Activated CD4-positive, alpha-beta memory T cell treated with anti-CD3 and anti-CD28 coated beads for 36 hours (primary cell): ENCODE measurements at regions of chr22 and their contacts with region 1.

Region 1: GRCh38 chr22:43014869-43015676 is at the start of gene PACSIN2:
- DNase-seq: peak; percentile 99
- H3K4me3 Mint-ChIP-seq: peak within 1 kb of the TSS; percentile 93
- H3K27ac Mint-ChIP-seq: peak within 1 kb of the TSS; percentile 82
- H3K4me1 Mint-ChIP-seq: peaks cover 23% of the 10 kb centered on the region
- H3K27me3 Mint-ChIP-seq: no peaks in the 10 kb centered on the region
- total RNA-seq, gene PACSIN2: 35.0 to 35.9 TPM

Region 2: GRCh38 chr22:42951126-42951710 is 63.9 kb before region 1 on chr22:
- CTCF ChIA-PET with region 1: no interaction called
- POLR2A ChIA-PET with region 1: no interaction called
- intact Hi-C with region 1: no loop called
- DNase-seq: no peak
- H3K4me3 Mint-ChIP-seq: no peak overlapping the region
- H3K27ac Mint-ChIP-seq: no peak overlapping the region
- H3K4me1 Mint-ChIP-seq: peaks cover 32% of the 10 kb centered on the region
- H3K27me3 Mint-ChIP-seq: no peaks in the 10 kb centered on the region

Region 3: DNA sequence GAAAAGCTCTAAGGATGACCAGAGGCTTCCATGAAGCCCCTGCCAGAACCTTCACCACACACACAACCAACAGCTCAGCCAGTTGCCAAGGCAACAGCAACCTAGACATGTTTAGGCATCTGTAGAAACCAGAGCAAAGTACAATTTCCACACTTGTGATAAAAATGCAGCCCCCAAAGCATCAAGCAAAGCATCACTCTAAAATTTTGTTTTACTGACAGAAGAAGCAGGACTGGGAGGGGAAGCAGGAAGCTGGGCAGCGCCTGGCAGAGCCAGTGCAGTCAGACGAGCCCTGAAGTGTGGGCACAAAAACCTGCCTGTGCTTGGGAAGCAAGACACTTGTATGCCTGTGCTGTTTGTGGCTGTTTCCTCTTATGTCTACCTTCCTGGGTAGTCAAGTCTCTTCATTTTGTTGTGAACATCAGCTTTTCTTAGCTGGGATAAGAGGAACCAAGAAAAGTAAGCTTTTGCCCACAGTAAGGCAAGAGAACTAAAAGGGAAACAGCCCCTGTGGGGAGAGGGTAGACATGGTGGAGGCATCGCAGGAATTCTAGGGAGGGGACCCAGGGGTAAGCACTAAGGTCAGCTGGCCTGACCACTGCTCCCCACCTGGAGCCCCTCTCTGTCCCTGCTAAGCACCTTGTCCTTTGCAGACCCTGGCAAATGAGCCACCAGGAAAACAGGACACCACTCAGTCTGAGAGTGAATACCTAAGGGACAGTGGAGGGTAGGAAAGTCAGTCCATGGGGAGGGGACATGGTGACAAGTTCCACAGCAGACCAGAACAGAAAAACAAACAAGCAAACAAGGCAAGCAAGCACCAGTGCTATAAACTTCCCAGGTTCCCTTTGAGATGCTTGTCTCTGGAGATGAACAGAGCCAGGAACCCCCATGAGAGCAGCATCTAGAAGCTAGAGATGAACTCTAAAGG is 13.5 kb before region 1 on chr22:
- CTCF ChIA-PET with region 1: interaction called, 8 read pairs
- POLR2A ChIA-PET with region 1: interaction called, 12 read pairs
- intact Hi-C with region 1: no loop called
- DNase-seq: peak; percentile 25
- H3K4me3 Mint-ChIP-seq: no peak overlapping the region
- H3K27ac Mint-ChIP-seq: no peak overlapping the region
- H3K4me1 Mint-ChIP-seq: peaks cover 86% of the 10 kb centered on the region
- H3K27me3 Mint-ChIP-seq: no peaks in the 10 kb centered on the region

Region 4: GRCh38 chr22:43435851-43436811 is 421.1 kb after region 1 on chr22:
- CTCF ChIA-PET with region 1: no interaction called
- POLR2A ChIA-PET with region 1: no interaction called
- intact Hi-C with region 1: no loop called
- DNase-seq: no peak
- H3K4me3 Mint-ChIP-seq: no peak overlapping the region
- H3K27ac Mint-ChIP-seq: no peak overlapping the region
- H3K4me1 Mint-ChIP-seq: no peaks in the 10 kb centered on the region
- H3K27me3 Mint-ChIP-seq: peaks cover 19% of the 10 kb centered on the region